Posterior vena cava (tissue), 2 donors: ENCODE measurements at regions of chr1 and their contacts with region 1.

Region 1: GRCh38 chr1:213530611-213531320 is 457.0 kb upstream of the PROX1 start:
- DNase-seq: no peak

Region 2: GRCh38 chr1:213600879-213601278 is 70.1 kb after region 1 on chr1:
- intact Hi-C with region 1: loop called in 1 of 2 experiments (anchors 2 kb)
- DNase-seq: no peak

Region 3: DNA sequence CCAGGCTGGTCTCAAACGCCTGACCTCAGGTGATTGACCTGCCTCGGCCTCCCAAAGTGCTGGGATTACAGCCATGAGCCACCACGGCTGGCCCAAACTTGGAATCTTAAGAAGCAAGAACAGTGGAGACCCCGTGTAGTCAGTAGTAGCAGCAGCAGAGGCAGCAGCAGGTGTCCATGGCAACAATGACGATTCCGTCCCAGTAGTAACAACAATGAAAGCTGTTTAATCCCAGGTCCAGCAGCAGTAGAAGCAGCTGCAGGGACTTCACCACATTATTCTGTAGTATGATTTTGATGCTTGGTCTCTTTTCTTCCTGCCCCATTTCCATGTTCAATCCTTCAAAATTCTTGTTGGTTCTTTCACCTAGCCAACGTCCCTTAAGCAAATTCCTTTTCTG is 1966.8 kb after region 1 on chr1:
- intact Hi-C with region 1: loop called in 1 of 2 experiments (anchors 10 kb)
- DNase-seq: no peak